CD4-positive, alpha-beta memory T cell (primary cell): ENCODE measurements at regions of chr12 and their contacts with region 1.

Region 1: GRCh38 chr12:6335451-6336078 is 6.3 kb downstream of the TNFRSF1A start:
- DNase-seq: peak; percentile 80 to 90 (median 82)
- H3K4me3 ChIP-seq: peak overlapping the region; percentile 61 to 64
- H3K4me3 Mint-ChIP-seq: no peak overlapping the region
- H3K27ac ChIP-seq: peak overlapping the region; percentile 92
- H3K27ac Mint-ChIP-seq: peak overlapping the region in 1 of 7 donors; percentile 96
- H3K4me1 ChIP-seq: peaks cover 83% of the 10 kb centered on the region
- H3K4me1 Mint-ChIP-seq: peaks cover 7 to 38% (median 32%) of the 10 kb centered on the region in 4 donors
- H3K27me3 ChIP-seq: no peaks in the 10 kb centered on the region
- H3K27me3 Mint-ChIP-seq: no peaks in the 10 kb centered on the region

Region 2: GRCh38 chr12:5944688-5945070 is 390.9 kb before region 1 on chr12:
- CTCF ChIA-PET with region 1: no interaction called
- POLR2A ChIA-PET with region 1: no interaction called
- intact Hi-C with region 1: no loop called
- DNase-seq: no peak
- H3K4me3 ChIP-seq: no peak overlapping the region
- H3K4me3 Mint-ChIP-seq: no peak overlapping the region
- H3K27ac ChIP-seq: no peak overlapping the region
- H3K27ac Mint-ChIP-seq: no peak overlapping the region
- H3K4me1 ChIP-seq: no peaks in the 10 kb centered on the region
- H3K4me1 Mint-ChIP-seq: peaks cover 0 to 7% (median 0%) of the 10 kb centered on the region in 4 donors
- H3K27me3 ChIP-seq: peaks cover 5% of the 10 kb centered on the region
- H3K27me3 Mint-ChIP-seq: peaks cover 51 to 72% of the 10 kb centered on the region in 2 donors

Region 3: DNA sequence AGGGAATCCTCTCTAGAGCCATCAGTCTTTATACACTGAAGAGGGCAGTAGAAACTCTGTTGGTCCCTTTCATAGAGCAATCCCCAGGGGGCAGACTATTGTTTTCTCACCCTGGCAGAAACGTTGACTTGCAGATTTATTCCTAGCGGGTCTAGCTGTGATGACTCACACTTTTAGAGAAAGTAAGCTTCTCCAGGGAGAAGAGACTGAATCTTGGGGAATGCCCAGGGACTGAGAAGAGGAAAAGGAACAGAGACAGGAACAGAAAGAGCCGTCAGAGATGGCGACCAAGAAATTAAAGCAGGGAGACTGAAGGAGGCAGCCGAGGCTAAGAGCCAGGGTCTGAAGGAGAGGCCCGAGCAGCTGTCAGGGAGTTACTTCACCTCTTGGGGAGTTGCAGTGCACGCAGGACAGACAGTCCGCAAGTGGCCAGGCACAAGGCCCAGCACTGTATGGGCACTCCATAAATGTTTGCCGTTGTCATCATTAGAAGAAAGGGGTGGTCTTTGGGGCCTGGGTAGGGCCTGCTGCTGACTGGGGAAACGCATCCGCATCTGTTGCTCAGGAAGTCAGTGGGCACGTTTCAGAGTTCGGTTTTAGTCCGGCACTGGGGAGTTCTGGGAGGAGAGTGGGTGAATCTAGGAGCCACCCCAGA is 12.1 kb before region 1 on chr12:
- CTCF ChIA-PET with region 1: interaction called, 72 read pairs
- POLR2A ChIA-PET with region 1: interaction called, 19 read pairs
- intact Hi-C with region 1: loop called (anchors 1 kb)
- DNase-seq: peak; percentile 47 to 66 (median 52)
- H3K4me3 ChIP-seq: peak overlapping the region in 1 of 2 donors; percentile 3
- H3K4me3 Mint-ChIP-seq: peak overlapping the region; percentile 76 to 90 (median 82)
- H3K27ac ChIP-seq: no peak overlapping the region
- H3K27ac Mint-ChIP-seq: peak overlapping the region; percentile 80 to 96 (median 94)
- H3K4me1 ChIP-seq: peaks cover 32% of the 10 kb centered on the region
- H3K4me1 Mint-ChIP-seq: peaks cover 26 to 53% (median 34%) of the 10 kb centered on the region in 4 donors
- H3K27me3 ChIP-seq: no peaks in the 10 kb centered on the region
- H3K27me3 Mint-ChIP-seq: no peaks in the 10 kb centered on the region

Region 4: DNA sequence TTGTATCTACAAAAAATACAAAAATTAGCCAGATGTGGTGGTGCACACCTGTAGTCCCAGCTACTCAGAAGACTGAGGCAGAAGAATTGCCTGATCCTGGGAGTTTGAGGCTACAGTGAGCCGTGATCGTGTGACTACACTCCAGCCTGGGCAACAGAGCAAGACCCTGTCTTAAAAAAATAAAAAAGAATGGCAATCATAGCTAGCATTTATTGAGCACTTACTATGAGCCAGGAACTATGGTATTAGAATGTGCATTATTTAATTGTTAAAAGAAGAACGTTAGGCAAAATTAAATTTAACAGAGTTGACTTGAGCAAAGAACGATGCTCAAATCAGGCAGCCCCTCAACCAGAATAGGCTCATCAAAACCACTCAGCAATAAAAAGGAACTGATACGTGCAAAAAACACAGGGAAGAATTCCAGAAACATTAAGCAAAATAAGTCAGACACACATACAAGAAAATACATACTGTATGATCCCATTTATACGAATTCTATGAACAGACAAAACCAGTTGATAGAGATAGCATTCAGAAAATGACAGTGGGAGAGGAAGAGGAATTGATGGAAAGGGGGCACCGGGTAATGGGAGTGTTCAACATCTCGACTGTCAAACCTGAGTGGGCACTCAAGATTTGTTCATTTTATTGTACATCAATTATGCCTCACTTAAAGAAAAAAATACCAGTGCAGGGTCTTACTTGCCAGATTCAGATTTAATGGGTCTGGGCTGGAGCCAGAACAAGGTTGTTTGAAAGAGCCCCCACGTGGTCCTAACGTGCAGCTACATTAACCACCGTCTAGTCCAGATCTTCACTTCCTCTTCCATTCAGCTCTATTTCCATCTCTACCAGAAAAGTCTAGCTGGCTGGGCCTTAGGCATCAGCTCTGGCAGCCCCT is 31.8 kb after region 1 on chr12:
- CTCF ChIA-PET with region 1: interaction called, 268 read pairs
- POLR2A ChIA-PET with region 1: interaction called, 250 read pairs
- intact Hi-C with region 1: loop called (anchors 1 kb)
- DNase-seq: peak; percentile 36 to 55 (median 48)
- H3K4me3 ChIP-seq: no peak overlapping the region
- H3K4me3 Mint-ChIP-seq: peak overlapping the region in 1 of 8 donors; percentile 5
- H3K27ac ChIP-seq: no peak overlapping the region
- H3K27ac Mint-ChIP-seq: peak overlapping the region in 5 of 7 donors; percentile 30 to 84 (median 79)
- H3K4me1 ChIP-seq: peaks cover 26% of the 10 kb centered on the region
- H3K4me1 Mint-ChIP-seq: peaks cover 8 to 38% (median 13%) of the 10 kb centered on the region in 4 donors
- H3K27me3 ChIP-seq: no peaks in the 10 kb centered on the region
- H3K27me3 Mint-ChIP-seq: no peaks in the 10 kb centered on the region

Region 5: DNA sequence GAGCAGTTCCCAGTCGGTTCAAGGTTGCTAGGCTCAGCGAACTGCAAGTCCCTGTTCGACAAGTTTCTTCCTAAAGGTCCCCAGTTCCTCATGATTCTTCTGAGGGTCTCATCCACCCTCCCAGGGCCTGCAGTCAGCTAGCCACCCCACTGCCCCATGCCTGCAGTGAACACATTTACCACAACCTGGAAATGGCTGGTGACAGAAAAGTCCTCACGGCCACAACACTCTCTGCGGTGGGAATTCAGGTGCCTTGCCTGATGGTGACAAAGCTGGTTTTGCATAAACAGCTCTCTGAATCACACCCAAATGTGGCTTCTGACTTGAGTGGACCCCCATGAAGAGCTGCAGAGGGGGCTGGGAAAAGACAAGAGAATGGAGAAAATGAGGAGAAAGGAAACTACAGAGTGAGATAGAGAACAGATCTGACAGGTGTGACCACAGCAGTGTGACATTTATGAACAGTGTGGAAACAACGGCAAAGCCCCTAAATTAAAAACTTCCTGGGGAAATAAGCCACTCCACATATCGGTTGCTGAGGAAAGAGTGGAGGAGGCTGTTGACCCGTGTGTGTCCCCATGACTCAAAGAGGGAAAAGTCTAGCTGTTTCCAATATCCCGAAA is 107.9 kb after region 1 on chr12:
- CTCF ChIA-PET with region 1: interaction called, 10 read pairs
- POLR2A ChIA-PET with region 1: interaction called, 12 read pairs
- intact Hi-C with region 1: no loop called
- DNase-seq: no peak
- H3K4me3 ChIP-seq: no peak overlapping the region
- H3K4me3 Mint-ChIP-seq: peak overlapping the region; percentile 83 to 99 (median 96)
- H3K27ac ChIP-seq: peak overlapping the region; percentile 41
- H3K27ac Mint-ChIP-seq: peak overlapping the region; percentile 80 to 99 (median 92)
- H3K4me1 ChIP-seq: peaks cover 37% of the 10 kb centered on the region
- H3K4me1 Mint-ChIP-seq: peaks cover 28 to 64% (median 40%) of the 10 kb centered on the region in 4 donors
- H3K27me3 ChIP-seq: no peaks in the 10 kb centered on the region
- H3K27me3 Mint-ChIP-seq: no peaks in the 10 kb centered on the region

Region 6: DNA sequence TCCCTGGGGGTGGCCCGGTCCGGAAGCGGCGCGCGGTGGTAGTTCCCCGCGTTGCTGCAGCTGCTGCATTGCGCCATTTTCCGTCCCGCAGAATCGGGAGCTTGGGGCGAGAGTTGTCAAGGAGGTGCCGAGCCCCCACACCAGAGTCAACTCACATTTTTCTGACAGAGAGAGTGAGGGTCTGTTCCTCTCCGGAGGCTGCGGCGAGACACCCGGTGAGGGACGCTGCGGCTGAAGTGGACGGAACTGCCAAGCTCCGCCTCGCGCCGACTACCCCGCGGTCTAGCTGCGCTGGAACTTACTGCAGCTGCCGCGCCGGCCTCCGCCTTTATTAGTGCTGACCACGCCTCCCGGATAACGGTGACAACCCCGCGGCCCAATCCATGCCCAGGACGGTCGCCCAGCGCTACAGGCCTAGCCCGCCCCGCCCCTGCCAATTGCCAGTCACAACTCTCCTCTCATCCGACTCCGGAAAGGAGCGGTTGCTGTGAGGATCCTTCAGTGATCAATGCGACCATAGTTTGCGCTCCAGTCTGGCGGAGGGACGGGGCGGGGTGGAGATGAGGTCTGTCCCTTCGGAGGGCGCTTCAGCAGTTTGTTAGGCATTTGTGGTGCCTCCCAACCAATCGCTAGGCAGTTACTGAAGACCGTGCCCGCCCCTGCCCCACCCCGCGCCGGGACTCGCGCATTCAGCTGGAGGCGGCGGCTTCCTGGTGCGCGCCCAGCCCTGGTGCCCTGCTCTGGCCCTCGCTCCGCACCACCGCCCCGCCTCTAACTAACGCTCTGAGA is 135.0 kb after region 1 on chr12 and contains the start of gene VAMP1:
- CTCF ChIA-PET with region 1: interaction called, 56 read pairs
- POLR2A ChIA-PET with region 1: interaction called, 80 read pairs
- intact Hi-C with region 1: loop called (anchors 2 kb)
- DNase-seq: peak; percentile 95 to 99 (median 96)
- H3K4me3 ChIP-seq: peak within 1 kb of the TSS; percentile 74 to 76
- H3K4me3 Mint-ChIP-seq: peak within 1 kb of the TSS; percentile 86 to 97 (median 92)
- H3K27ac ChIP-seq: peak within 1 kb of the TSS; percentile 64
- H3K27ac Mint-ChIP-seq: peak within 1 kb of the TSS; percentile 90 to 97 (median 94)
- H3K4me1 ChIP-seq: peaks cover 46% of the 10 kb centered on the region
- H3K4me1 Mint-ChIP-seq: peaks cover 35 to 52% (median 48%) of the 10 kb centered on the region in 4 donors
- H3K27me3 ChIP-seq: no peaks in the 10 kb centered on the region
- H3K27me3 Mint-ChIP-seq: no peaks in the 10 kb centered on the region
- total RNA-seq, gene VAMP1: 97.7 to 101 TPM

Region 7: GRCh38 chr12:6554168-6555017 is 218.8 kb after region 1 on chr12:
- CTCF ChIA-PET with region 1: interaction called, 5 read pairs
- POLR2A ChIA-PET with region 1: no interaction called
- intact Hi-C with region 1: loop called (anchors 5 kb)
- DNase-seq: peak; percentile 60 to 79 (median 63)
- H3K4me3 ChIP-seq: peak overlapping the region; percentile 71 to 73
- H3K4me3 Mint-ChIP-seq: peak overlapping the region; percentile 81 to 96 (median 88)
- H3K27ac ChIP-seq: peak overlapping the region; percentile 48
- H3K27ac Mint-ChIP-seq: peak overlapping the region; percentile 14 to 89 (median 70)
- H3K4me1 ChIP-seq: peaks cover 57% of the 10 kb centered on the region
- H3K4me1 Mint-ChIP-seq: peaks cover 28 to 64% (median 45%) of the 10 kb centered on the region in 4 donors
- H3K27me3 ChIP-seq: no peaks in the 10 kb centered on the region
- H3K27me3 Mint-ChIP-seq: no peaks in the 10 kb centered on the region

Region 8: GRCh38 chr12:7175493-7175892 is 839.9 kb after region 1 on chr12:
- CTCF ChIA-PET with region 1: no interaction called
- POLR2A ChIA-PET with region 1: no interaction called
- intact Hi-C with region 1: no loop called
- DNase-seq: no peak
- H3K4me3 ChIP-seq: no peak overlapping the region
- H3K4me3 Mint-ChIP-seq: no peak overlapping the region
- H3K27ac ChIP-seq: no peak overlapping the region
- H3K27ac Mint-ChIP-seq: no peak overlapping the region
- H3K4me1 ChIP-seq: no peaks in the 10 kb centered on the region
- H3K4me1 Mint-ChIP-seq: no peaks in the 10 kb centered on the region
- H3K27me3 ChIP-seq: no peaks in the 10 kb centered on the region
- H3K27me3 Mint-ChIP-seq: peaks cover 26 to 38% of the 10 kb centered on the region in 2 donors